Heart right ventricle (tissue), 16 donors: ENCODE measurements at regions of chr1 and their contacts with region 1.

Region 1: GRCh38 chr1:99645699-99646531 is at the start of gene PALMD:
- DNase-seq: peak; percentile 48 to 61
- ATAC-seq: peak; percentile 22 to 80 (median 66)
- H3K4me3 ChIP-seq: peak within 1 kb of the TSS; percentile 50 to 75 (median 59)
- H3K27ac ChIP-seq: peak within 1 kb of the TSS; percentile 84 to 99 (median 94)
- H3K4me1 ChIP-seq: peaks cover 4 to 48% (median 31%) of the 10 kb centered on the region in 9 donors
- H3K27me3 ChIP-seq: no peaks in the 10 kb centered on the region
- CTCF ChIP-seq: no peak
- total RNA-seq, gene PALMD: 82.5 to 173 (median 121) TPM

Region 2: DNA sequence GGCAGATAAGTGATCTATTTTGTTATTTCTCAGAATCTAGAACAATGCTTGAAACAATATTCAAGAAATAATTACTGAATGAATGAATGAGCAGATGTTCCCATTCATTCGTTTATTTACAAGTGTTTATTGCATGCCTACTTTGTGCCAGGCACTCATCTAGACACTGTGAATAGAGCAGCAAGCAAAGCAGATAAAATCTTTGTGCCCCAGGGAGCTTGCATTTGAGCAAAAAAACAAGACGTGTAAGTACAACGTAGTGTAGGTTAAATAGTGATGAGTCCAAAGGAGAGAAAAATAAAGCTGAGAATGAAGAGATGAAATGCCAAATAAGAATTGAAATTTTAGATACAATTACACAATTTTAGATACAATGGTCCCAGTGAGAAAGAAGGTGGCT is 617.5 kb before region 1 on chr1:
- intact Hi-C with region 1: no loop called
- DNase-seq: no peak
- ATAC-seq: no peak
- H3K4me3 ChIP-seq: no peak overlapping the region
- H3K27ac ChIP-seq: no peak overlapping the region
- H3K4me1 ChIP-seq: no peaks in the 10 kb centered on the region
- H3K27me3 ChIP-seq: peaks cover 0 to 7% (median 0%) of the 10 kb centered on the region in 7 donors
- CTCF ChIP-seq: no peak

Region 3: DNA sequence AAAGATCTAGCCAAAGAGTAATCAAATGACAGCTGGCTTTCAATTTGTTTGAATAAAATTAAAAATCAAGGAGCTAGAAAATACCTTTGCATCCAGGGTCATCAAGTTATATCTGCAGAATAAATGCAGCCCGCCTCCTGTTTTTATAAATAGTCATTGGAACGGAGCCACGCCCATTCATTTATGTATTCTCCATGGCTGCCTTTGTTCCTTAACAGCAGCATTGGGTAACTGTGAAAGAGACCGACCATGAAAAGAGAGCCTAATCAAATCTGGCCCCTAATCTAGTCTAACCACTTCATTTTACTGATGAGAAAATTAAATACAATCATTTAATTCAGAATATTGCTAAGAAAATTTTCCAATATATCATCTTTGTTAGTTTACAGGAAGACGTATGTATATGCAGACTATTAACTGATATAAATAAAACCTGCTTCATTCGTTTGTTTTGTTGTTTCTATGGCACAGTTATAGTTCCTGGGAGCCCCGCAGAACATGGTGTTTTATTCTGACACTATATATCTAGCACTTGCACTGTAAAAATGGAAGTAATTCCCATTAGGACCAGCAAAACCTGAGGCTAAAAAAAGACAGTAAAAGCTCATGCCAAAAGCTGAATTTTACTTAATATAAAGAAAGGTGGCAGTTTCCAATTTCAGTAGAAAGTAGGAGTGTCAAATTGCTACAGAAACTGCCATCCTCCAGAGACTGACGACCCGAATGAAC is 111.8 kb before region 1 on chr1:
- intact Hi-C with region 1: loop called in 4 of 10 experiments (anchors 2 to 10 kb)
- DNase-seq: peak in 1 of 2 donors; percentile 22
- ATAC-seq: peak in 6 of 8 donors; percentile 39 to 77 (median 67)
- H3K4me3 ChIP-seq: peak overlapping the region in 5 of 10 donors; percentile 3 to 33 (median 6)
- H3K27ac ChIP-seq: peak overlapping the region in 9 of 10 donors; percentile 3 to 83 (median 63)
- H3K4me1 ChIP-seq: peaks cover 0 to 41% (median 19%) of the 10 kb centered on the region in 9 donors
- H3K27me3 ChIP-seq: no peaks in the 10 kb centered on the region
- CTCF ChIP-seq: no peak

Region 4: GRCh38 chr1:99590578-99591209 is 55.2 kb before region 1 on chr1:
- intact Hi-C with region 1: loop called in 2 of 10 experiments (anchors 5 to 10 kb)
- DNase-seq: peak; percentile 22 to 62
- ATAC-seq: peak; percentile 16 to 93 (median 81)
- H3K4me3 ChIP-seq: no peak overlapping the region
- H3K27ac ChIP-seq: peak overlapping the region in 8 of 10 donors; percentile 41 to 72 (median 54)
- H3K4me1 ChIP-seq: peaks cover 5 to 39% (median 16%) of the 10 kb centered on the region in 9 donors
- H3K27me3 ChIP-seq: no peaks in the 10 kb centered on the region
- CTCF ChIP-seq: no peak

Region 5: GRCh38 chr1:99606306-99606705 is 39.6 kb before region 1 on chr1:
- intact Hi-C with region 1: loop called in 2 of 10 experiments (anchors 5 kb)
- DNase-seq: no peak
- ATAC-seq: no peak
- H3K4me3 ChIP-seq: no peak overlapping the region
- H3K27ac ChIP-seq: no peak overlapping the region
- H3K4me1 ChIP-seq: peaks cover 0 to 30% (median 13%) of the 10 kb centered on the region in 9 donors
- H3K27me3 ChIP-seq: no peaks in the 10 kb centered on the region
- CTCF ChIP-seq: no peak

Region 6: GRCh38 chr1:99685516-99686180 is 39.7 kb after region 1 on chr1:
- intact Hi-C with region 1: loop called in 6 of 10 experiments (anchors 2 to 5 kb)
- DNase-seq: peak; percentile 68 to 88
- ATAC-seq: peak; percentile 91 to 95 (median 93)
- H3K4me3 ChIP-seq: no peak overlapping the region
- H3K27ac ChIP-seq: peak overlapping the region; percentile 1 to 83 (median 62)
- H3K4me1 ChIP-seq: peaks cover 7 to 72% (median 43%) of the 10 kb centered on the region in 9 donors
- H3K27me3 ChIP-seq: no peaks in the 10 kb centered on the region
- CTCF ChIP-seq: peak; percentile 49 to 76 (median 69)

Region 7: DNA sequence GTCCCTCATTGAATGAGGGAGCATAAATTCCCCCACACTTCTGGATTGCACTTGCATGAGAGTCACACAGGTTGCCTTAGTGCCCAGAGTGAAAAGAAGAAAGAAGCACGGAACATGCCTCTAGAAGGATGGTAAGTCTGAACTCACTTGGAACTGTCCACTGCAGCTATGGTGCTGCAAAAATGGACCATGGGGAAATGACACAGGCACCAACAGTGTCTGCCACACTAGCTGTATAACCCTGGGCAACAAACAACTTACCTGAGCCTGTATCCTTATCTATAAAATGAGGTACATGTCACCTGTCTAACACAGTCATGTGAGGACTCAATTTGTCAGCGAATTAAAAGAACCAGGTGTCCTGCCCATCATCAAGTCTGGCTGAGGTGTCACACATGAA is 50.7 kb after region 1 on chr1:
- intact Hi-C with region 1: no loop called
- DNase-seq: no peak
- ATAC-seq: peak in 6 of 8 donors; percentile 17 to 56 (median 30)
- H3K4me3 ChIP-seq: no peak overlapping the region
- H3K27ac ChIP-seq: peak overlapping the region in 1 of 10 donors; percentile 28
- H3K4me1 ChIP-seq: peaks cover 0 to 17% (median 6%) of the 10 kb centered on the region in 9 donors
- H3K27me3 ChIP-seq: no peaks in the 10 kb centered on the region
- CTCF ChIP-seq: no peak